Heart left ventricle (tissue), 16 donors: ENCODE measurements at regions of chr17 and their contacts with region 1.

Region 1: DNA sequence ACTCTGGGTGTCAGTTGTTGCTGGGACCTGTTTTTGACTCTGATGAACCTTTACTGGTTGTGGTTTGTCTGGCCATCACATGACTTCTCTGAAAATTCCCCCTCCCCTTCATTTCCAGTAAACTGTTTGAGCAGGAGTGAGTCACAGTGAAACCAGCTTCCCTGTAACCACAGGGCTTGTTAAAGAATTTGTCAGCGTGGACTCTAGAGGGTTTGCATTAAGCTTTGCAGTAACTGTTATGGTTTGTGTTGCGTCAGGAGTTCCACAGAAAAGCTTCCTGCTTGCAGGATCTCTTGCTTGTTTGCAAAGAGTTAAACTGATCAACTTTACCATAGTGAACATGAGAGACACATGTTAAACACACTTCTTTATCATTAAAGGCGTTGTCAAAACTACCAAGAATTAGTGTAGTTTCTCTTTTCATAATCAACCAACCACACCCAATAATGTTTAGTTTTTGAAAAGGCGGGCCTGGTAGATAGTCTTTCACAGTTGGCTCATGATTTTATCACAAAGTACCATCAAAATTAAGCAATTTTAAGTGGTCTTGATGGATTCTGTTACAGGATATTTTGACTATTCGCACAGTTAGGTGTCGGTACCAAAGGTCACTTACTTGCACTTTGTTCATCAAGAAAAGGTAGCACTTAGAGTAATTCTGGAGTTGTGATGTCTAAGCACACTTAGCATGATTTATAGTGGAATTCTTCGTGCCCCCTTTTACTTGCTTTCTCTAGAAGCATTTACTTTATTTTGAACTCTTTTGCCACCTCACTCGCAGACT is 79.3 kb downstream of the VMP1 start:
- DNase-seq: peak in 3 of 5 donors; percentile 49 to 58 (median 52)
- ATAC-seq: peak; percentile 62 to 96 (median 92)
- H3K4me3 ChIP-seq: peak overlapping the region in 7 of 12 donors; percentile 2 to 42 (median 19)
- H3K27ac ChIP-seq: peak overlapping the region; percentile 14 to 97 (median 70)
- H3K4me1 ChIP-seq: peaks cover 5 to 86% (median 31%) of the 10 kb centered on the region in 12 donors
- H3K27me3 ChIP-seq: no peaks in the 10 kb centered on the region
- CTCF ChIP-seq: no peak
- POLR2A ChIP-seq: peak in 1 of 2 donors; percentile 21

Region 2: DNA sequence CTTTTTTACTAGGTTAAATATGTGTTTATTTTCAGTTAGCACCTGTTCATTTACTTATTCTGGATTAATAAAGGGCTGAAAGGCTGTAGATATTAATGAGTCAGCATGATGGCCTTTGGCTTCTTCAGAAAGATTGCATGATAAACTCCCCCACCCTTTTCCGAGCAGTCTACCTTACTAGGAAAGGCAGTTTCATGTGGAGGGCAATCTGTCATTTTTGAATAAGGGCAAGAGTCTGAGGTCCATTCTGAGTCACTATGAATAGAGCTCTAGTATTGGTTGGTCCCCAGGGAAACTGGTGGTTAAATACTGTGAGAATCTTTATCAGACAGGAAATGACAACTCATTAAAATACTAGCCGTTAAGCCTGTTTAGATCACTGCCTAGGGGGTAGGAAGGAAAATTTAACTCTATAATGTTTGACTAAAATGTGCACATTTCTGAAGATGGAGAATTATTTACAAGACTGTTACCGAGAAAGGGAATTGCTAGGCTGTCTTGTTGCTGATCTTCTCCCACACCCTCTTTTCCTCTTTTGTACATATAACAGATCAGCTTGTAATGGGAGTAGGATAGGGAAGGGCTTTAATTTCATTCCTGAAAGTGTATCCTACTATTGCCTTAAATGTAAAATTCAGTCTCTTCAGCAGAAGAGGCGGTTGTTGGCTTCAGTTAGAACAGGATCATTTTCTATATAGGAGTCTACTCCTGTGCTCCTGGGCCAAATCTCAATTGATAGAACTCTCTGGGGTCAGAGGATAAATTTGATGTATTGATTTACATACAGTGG is 42.7 kb after region 1 on chr17:
- intact Hi-C with region 1: loop called in 2 of 10 experiments (anchors 5 to 10 kb)
- DNase-seq: peak in 1 of 5 donors; percentile 56
- ATAC-seq: peak; percentile 17 to 92 (median 89)
- H3K4me3 ChIP-seq: peak overlapping the region in 2 of 12 donors; percentile 8 to 38
- H3K27ac ChIP-seq: peak overlapping the region in 11 of 12 donors; percentile 19 to 91 (median 73)
- H3K4me1 ChIP-seq: peaks cover 5 to 82% (median 15%) of the 10 kb centered on the region in 12 donors
- H3K27me3 ChIP-seq: no peaks in the 10 kb centered on the region
- CTCF ChIP-seq: no peak
- POLR2A ChIP-seq: no peak

Region 3: GRCh38 chr17:59837308-59838051 is 50.8 kb after region 1 on chr17:
- intact Hi-C with region 1: loop called in 3 of 10 experiments (anchors 5 to 10 kb)
- DNase-seq: peak in 4 of 5 donors; percentile 41 to 82 (median 74)
- ATAC-seq: peak; percentile 89 to 97 (median 94)
- H3K4me3 ChIP-seq: peak overlapping the region in 11 of 12 donors; percentile 40 to 77 (median 57)
- H3K27ac ChIP-seq: peak overlapping the region; percentile 77 to 97 (median 90)
- H3K4me1 ChIP-seq: peaks cover 0 to 38% (median 16%) of the 10 kb centered on the region in 12 donors
- H3K27me3 ChIP-seq: no peaks in the 10 kb centered on the region
- CTCF ChIP-seq: peak in 3 of 12 donors; percentile 10 to 23 (median 16)
- POLR2A ChIP-seq: peak in 1 of 2 donors; percentile 54